ENCODE measurements at regions of chr9 and their contacts with region 1.

Region 1: DNA sequence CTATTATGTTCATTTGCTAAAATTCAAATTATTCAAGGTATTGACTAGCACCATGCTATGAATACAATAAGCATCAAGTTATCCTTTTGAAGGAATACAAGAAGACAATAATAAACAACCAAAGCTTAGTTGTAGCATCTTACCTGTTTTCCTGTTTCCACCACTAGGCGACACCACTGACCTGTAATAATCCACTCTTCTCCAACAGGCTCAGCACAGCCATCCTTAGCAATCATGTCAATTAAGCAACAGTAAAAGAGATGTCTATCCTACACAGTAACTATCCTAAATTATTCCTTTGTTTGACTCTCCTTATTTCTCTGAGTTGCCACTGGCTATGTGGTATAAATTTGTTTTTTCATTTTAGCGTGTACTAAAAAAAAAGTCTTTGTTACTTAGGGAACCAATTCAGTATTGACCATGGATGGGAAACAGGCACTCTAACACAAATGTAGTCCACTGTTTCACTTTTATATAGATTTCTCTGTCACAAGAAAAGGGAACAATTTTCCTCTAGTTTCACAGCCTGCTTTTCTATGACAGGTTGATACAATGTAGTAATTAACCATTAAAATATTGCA is 46.2 kb downstream of the PCA3 start:
- DNase-seq: no peak
- H3K4me3 ChIP-seq: no peak overlapping the region
- CTCF ChIP-seq: peak; percentile 81

Region 2: GRCh38 chr9:76451234-76451633 is 359.2 kb before region 1 on chr9:
- CTCF ChIA-PET with region 1: no interaction called
- POLR2A ChIA-PET with region 1: no interaction called
- DNase-seq: no peak
- H3K4me3 ChIP-seq: no peak overlapping the region
- CTCF ChIP-seq: no peak

Region 3: GRCh38 chr9:76980576-76980975 is 170.1 kb after region 1 on chr9:
- CTCF ChIA-PET with region 1: interaction called, 298 read pairs
- POLR2A ChIA-PET with region 1: no interaction called
- DNase-seq: no peak
- H3K4me3 ChIP-seq: no peak overlapping the region
- CTCF ChIP-seq: no peak

Region 4: DNA sequence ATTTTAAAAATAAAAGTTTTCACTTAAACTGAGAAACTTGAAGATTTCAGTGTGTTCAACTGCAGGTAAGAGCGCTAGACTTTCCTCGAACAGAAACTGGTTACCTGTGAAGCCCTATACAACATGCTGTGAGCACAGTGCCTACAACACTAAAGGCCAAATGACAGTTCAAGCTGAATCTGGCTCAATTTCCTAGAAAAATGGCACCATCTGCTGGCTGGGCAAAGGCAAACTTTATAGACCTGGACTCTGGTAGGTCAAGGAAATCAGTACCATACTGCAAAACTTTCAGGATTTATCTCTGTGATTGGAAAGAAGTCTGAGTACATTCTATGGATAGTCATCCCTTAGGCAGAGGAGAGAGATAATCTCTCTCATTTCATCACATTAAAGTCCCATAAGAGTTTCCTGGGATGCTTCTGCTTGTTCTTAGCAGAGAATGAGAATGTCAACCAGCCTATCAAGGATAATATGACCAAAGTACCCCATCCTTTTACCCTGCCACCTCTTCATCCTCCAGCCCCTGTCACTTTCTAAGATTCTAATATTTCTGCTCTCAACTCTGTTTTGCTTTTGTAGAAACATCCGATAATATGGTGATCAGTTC is 177.2 kb after region 1 on chr9:
- CTCF ChIA-PET with region 1: interaction called, 298 read pairs
- POLR2A ChIA-PET with region 1: no interaction called
- DNase-seq: peak; percentile 7
- H3K4me3 ChIP-seq: no peak overlapping the region
- CTCF ChIP-seq: peak; percentile 63

Region 5: GRCh38 chr9:76996700-76997099 is 186.2 kb after region 1 on chr9:
- CTCF ChIA-PET with region 1: interaction called, 298 read pairs
- POLR2A ChIA-PET with region 1: no interaction called
- DNase-seq: no peak
- H3K4me3 ChIP-seq: no peak overlapping the region
- CTCF ChIP-seq: peak; percentile 80

Region 6: GRCh38 chr9:77010527-77010926 is 200.1 kb after region 1 on chr9:
- CTCF ChIA-PET with region 1: interaction called, 18 read pairs
- POLR2A ChIA-PET with region 1: no interaction called
- DNase-seq: no peak
- H3K4me3 ChIP-seq: no peak overlapping the region
- CTCF ChIP-seq: no peak

Region 7: GRCh38 chr9:77018058-77018968 is 207.8 kb after region 1 on chr9:
- CTCF ChIA-PET with region 1: interaction called, 15 read pairs
- POLR2A ChIA-PET with region 1: no interaction called
- DNase-seq: no peak
- H3K4me3 ChIP-seq: no peak overlapping the region; the same call in 1 of the 2 replicates
- CTCF ChIP-seq: no peak

Region 8: GRCh38 chr9:77149879-77150278 is 339.4 kb after region 1 on chr9:
- CTCF ChIA-PET with region 1: interaction called, 67 read pairs
- POLR2A ChIA-PET with region 1: no interaction called
- DNase-seq: no peak
- H3K4me3 ChIP-seq: no peak overlapping the region
- CTCF ChIP-seq: no peak